Panc1 (cell line): ENCODE measurements at regions of chr3 and their contacts with region 1.

Region 1: GRCh38 chr3:172836390-172836997 is 86.0 kb downstream of the ECT2 start:
- DNase-seq: peak; percentile 32
- ATAC-seq: peak; percentile 88
- H3K4me3 ChIP-seq: no peak overlapping the region
- H3K27ac ChIP-seq: no peak overlapping the region
- H3K4me1 ChIP-seq: no peaks in the 10 kb centered on the region
- H3K27me3 ChIP-seq: peaks cover 8% of the 10 kb centered on the region; the same call in 1 of the 2 replicates
- CTCF ChIP-seq: peak; percentile 80

Region 2: GRCh38 chr3:172915911-172916514 is 79.5 kb after region 1 on chr3:
- CTCF ChIA-PET with region 1: no interaction called
- POLR2A ChIA-PET with region 1: no interaction called
- in situ Hi-C with region 1: no loop called
- intact Hi-C with region 1: no loop called
- DNase-seq: no peak
- ATAC-seq: no peak
- H3K4me3 ChIP-seq: no peak overlapping the region
- H3K27ac ChIP-seq: no peak overlapping the region
- H3K4me1 ChIP-seq: peaks cover 15% of the 10 kb centered on the region
- H3K27me3 ChIP-seq: no peaks in the 10 kb centered on the region
- CTCF ChIP-seq: no peak

Region 3: GRCh38 chr3:172982736-172983364 is 146.4 kb after region 1 on chr3:
- CTCF ChIA-PET with region 1: no interaction called
- POLR2A ChIA-PET with region 1: no interaction called
- in situ Hi-C with region 1: no loop called
- intact Hi-C with region 1: loop called (anchors 10 kb)
- DNase-seq: no peak
- ATAC-seq: no peak
- H3K4me3 ChIP-seq: no peak overlapping the region
- H3K27ac ChIP-seq: no peak overlapping the region
- H3K4me1 ChIP-seq: no peaks in the 10 kb centered on the region
- H3K27me3 ChIP-seq: 0 out of 2 replicates have a peak, but pooled peaks cover 2% of the 10 kb centered on the region
- CTCF ChIP-seq: peak; percentile 46

Region 4: GRCh38 chr3:173045770-173046382 is 209.4 kb after region 1 on chr3:
- CTCF ChIA-PET with region 1: no interaction called
- POLR2A ChIA-PET with region 1: no interaction called
- in situ Hi-C with region 1: no loop called
- intact Hi-C with region 1: loop called (anchors 5 kb)
- DNase-seq: no peak
- ATAC-seq: no peak
- H3K4me3 ChIP-seq: no peak overlapping the region
- H3K27ac ChIP-seq: no peak overlapping the region
- H3K4me1 ChIP-seq: no peaks in the 10 kb centered on the region
- H3K27me3 ChIP-seq: no peaks in the 10 kb centered on the region; the same call in 1 of the 2 replicates
- CTCF ChIP-seq: peak; percentile 9; the same call in 1 of the 2 replicates